Gastrocnemius medialis (tissue), 4 donors: ENCODE measurements at regions of chr17 and their contacts with region 1.

Region 1: DNA sequence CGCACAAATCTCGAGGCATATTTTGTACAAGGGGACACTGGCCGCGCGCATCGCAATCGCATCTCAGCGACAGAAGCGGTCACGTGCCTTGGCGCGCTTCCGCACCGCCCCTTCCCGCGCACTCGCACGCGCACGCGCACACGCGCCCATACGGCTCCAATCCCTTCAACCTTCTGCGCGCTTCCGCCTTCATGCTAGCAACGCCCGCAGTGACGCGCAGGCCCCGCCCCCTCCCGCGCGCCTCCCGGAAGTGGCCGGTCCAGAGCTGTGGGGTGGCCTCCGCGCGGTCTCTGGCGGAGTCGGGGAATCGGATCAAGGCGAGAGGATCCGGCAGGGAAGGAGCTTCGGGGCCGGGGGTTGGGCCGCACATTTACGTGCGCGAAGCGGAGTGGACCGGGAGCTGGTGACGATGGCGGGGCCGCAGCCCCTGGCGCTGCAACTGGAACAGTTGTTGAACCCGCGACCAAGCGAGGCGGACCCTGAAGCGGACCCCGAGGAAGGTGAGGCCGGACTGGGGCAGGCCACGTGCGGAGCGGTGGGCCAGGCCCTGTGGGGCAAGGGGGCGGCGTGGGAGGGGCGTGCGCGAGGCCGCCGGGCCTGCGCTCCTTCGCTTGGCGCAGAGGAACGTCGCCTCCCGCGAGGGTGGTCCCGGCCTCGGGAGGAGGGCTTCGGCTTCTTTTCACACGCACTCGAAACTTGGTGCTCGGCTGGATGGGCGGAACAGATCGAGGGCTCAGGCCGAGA is at the start of gene AATF:
- DNase-seq: peak; percentile 89 to 93
- ATAC-seq: peak; percentile 96 to 98
- H3K4me3 ChIP-seq: peak within 1 kb of the TSS; percentile 68 to 96 (median 86)
- H3K27ac ChIP-seq: peak within 1 kb of the TSS; percentile 78 to 92 (median 84)
- H3K4me1 ChIP-seq: peaks cover 15 to 19% of the 10 kb centered on the region in 2 donors
- H3K27me3 ChIP-seq: peaks cover 38 to 41% (median 41%) of the 10 kb centered on the region in 3 donors
- CTCF ChIP-seq: no peak
- POLR2A ChIP-seq: peak; percentile 50 to 74
- total RNA-seq, gene AATF: 30.3 to 50.5 (median 40.9) TPM

Region 2: DNA sequence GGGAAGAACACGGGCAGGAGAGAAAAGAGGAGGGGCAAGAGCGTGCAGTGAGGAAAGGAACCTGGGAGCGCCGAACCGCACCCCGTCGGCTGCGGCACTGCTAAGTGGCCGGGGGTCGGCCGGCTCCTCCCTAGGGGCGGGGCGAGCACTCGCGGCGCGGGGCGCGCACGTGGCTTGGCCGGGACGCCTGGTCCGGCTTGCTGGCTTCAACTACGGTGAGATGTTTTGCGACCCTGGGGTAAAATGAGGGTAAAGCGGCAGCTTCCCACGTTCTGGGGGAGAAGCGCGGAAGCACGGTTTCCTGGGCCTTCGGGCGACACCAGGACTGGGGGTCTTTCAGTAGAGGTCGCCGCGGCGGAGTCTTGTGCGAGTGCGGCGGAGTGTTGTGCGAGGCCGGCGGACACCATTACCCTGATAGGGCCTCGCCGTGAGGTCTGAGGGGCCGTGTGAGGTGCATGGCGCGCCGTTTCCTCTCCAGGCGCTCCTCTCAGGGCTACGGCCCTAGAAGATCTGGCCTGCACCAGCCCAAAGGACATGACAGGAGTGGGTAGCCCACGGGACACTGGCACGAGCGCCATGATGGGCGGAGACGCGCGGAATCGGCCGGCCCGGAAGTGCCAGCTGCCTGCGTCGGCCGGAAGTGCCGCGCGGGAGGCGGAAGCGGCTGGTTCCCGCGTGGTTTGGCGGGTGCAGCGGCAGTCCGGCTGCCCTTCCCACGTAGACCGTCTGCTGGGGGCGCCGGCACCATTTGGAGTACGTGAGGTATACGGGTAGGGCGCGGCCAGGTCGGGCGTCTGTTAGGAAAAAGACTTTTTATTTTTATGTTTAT is 413.8 kb before region 1 on chr17 and contains the starts of genes MYO19 and PIGW:
- in situ Hi-C with region 1: no loop called
- intact Hi-C with region 1: loop called (anchors 5 kb)
- DNase-seq: peak; percentile 79 to 88
- ATAC-seq: peak; percentile 84 to 89
- H3K4me3 ChIP-seq: peak within 1 kb of the TSS; percentile 70 to 98 (median 92)
- H3K27ac ChIP-seq: peak within 1 kb of the TSS; percentile 91 to 100 (median 99)
- H3K4me1 ChIP-seq: peaks cover 11 to 19% of the 10 kb centered on the region in 2 donors
- H3K27me3 ChIP-seq: no peaks in the 10 kb centered on the region
- CTCF ChIP-seq: peak in 1 of 5 experiments; percentile 11
- POLR2A ChIP-seq: peak; percentile 83 to 92
- total RNA-seq, gene MYO19: 7.5 to 16.8 (median 13.2) TPM
- total RNA-seq, gene PIGW: 3.0 to 6.9 (median 4.7) TPM

Region 3: DNA sequence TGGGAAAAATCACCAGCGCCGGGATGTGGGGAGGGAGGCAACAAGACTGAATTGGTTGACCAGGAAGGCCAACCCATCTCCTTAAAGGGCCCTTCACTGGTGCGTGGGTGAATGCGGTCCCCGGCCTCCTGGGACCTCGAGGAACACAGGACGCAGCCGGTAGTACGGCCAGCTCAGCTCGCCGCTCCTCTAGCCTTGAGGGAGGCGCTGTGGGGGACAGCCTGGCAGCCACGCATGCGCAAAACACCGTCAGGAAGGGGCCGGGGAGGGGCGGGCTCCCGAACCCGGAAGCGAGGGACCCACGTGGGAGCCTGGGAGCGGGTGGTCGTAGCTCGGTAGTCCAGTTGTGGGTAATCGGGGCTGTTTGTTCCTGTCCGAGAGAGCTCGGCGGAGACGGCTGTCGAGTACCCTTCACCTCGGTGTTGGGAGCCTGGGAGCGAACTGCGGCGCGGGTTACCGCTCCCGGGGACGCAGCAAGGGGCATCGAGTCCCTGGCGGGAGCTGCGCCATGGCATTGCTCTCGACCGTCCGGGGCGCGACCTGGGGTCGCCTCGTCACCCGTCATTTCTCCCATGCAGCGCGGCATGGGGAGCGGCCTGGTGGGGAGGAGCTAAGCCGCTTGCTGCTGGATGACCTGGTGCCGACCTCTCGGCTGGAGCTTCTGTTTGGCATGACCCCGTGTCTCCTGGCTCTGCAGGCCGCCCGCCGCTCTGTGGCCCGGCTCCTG is 347.4 kb before region 1 on chr17 and contains the start of gene MRM1:
- in situ Hi-C with region 1: loop called in 1 of 4 experiments (anchors 25 kb)
- intact Hi-C with region 1: loop called (anchors 5 kb)
- DNase-seq: peak; percentile 86 to 92
- ATAC-seq: peak; percentile 92 to 93
- H3K4me3 ChIP-seq: peak within 1 kb of the TSS; percentile 82 to 100 (median 88)
- H3K27ac ChIP-seq: peak within 1 kb of the TSS; percentile 76 to 95 (median 90)
- H3K4me1 ChIP-seq: peaks cover 12 to 23% of the 10 kb centered on the region in 2 donors
- H3K27me3 ChIP-seq: no peaks in the 10 kb centered on the region
- CTCF ChIP-seq: peak in 1 of 5 experiments; percentile 21
- POLR2A ChIP-seq: peak; percentile 40 to 66
- total RNA-seq, gene MRM1: 8.8 to 13.9 (median 10.8) TPM

Region 4: DNA sequence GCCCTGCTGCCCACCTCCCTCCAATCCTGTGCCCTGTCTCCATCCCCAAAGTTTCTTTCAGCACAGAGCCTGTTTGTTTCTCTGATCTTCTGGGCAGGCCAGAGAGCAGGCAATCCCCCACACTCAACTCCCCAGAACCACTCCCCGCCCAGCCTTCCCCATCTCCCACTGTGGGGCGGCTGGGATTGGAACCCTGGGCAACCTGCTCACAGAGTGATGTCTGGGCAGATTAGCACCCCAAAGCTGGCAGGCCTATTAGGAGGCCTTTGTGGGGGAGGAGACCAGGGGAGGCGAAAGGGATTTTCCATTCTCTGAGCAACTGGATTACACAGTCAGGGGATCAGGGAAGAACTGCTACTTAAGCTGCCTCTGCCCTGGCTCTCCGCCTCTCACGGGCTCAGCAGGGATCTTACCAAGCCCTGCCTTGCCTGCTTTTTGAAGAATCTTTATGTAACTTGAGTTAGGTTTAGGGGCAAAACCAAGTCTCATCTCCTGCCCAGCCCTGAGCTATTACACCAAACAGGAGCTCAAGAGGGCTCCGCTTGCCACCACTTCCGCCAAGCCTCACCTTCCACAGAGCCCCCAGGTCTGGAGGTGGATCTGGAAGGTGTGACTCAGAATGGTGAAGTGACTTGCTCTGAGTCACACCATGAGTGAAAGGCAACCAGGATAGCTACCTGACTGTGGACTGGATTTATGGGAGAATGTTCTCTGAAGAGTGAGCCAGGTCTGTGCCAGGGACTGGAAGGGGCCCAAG is 27.6 kb before region 1 on chr17:
- in situ Hi-C with region 1: no loop called
- intact Hi-C with region 1: no loop called
- DNase-seq: no peak
- ATAC-seq: no peak
- H3K4me3 ChIP-seq: no peak overlapping the region
- H3K27ac ChIP-seq: no peak overlapping the region
- H3K4me1 ChIP-seq: no peaks in the 10 kb centered on the region
- H3K27me3 ChIP-seq: peaks cover 18 to 23% (median 21%) of the 10 kb centered on the region in 3 donors
- CTCF ChIP-seq: no peak
- POLR2A ChIP-seq: no peak

Region 5: DNA sequence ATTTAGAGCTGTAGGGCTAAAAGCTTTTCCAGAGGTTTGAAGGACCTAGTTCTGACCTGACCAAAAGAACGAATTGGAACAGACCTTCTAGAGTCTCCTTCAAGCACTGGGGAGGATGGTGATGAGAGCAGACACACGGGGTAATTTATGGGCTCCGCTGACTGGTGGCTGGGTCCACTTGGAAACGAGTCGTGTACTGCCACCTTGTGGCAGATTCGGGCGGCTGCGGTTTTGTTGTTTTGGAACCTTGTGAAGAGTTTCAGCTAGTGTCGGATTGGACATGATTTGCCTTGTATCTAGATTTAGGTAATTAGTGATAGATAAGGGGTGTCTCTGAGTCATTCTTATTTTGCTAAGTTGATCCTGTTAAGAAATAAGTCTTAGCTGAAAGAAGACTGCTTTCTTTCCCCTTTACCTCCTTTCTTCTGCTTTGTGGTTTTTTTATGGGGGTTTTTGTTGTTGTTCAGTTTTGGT is 98.8 kb after region 1 on chr17:
- in situ Hi-C with region 1: no loop called
- intact Hi-C with region 1: loop called (anchors 5 kb)
- DNase-seq: peak; percentile 54 to 73
- ATAC-seq: peak; percentile 62 to 91
- H3K4me3 ChIP-seq: no peak overlapping the region
- H3K27ac ChIP-seq: no peak overlapping the region
- H3K4me1 ChIP-seq: peaks cover 0 to 5% of the 10 kb centered on the region in 2 donors
- H3K27me3 ChIP-seq: no peaks in the 10 kb centered on the region
- CTCF ChIP-seq: peak; percentile 55 to 88 (median 80)
- POLR2A ChIP-seq: no peak

Region 6: GRCh38 chr17:37247825-37248224 is 298.9 kb after region 1 on chr17:
- in situ Hi-C with region 1: no loop called
- intact Hi-C with region 1: no loop called
- DNase-seq: no peak
- ATAC-seq: no peak
- H3K4me3 ChIP-seq: no peak overlapping the region
- H3K27ac ChIP-seq: no peak overlapping the region
- H3K4me1 ChIP-seq: no peaks in the 10 kb centered on the region
- H3K27me3 ChIP-seq: no peaks in the 10 kb centered on the region
- CTCF ChIP-seq: no peak
- POLR2A ChIP-seq: no peak

Region 7: GRCh38 chr17:37406635-37407461 is 458.0 kb after region 1 on chr17 and contains the starts of genes ACACA and TADA2A:
- in situ Hi-C with region 1: no loop called
- intact Hi-C with region 1: loop called (anchors 5 kb)
- DNase-seq: peak; percentile 48 to 73
- ATAC-seq: peak; percentile 84 to 86
- H3K4me3 ChIP-seq: peak within 1 kb of the TSS; percentile 85 to 95 (median 92)
- H3K27ac ChIP-seq: peak within 1 kb of the TSS; percentile 95 to 97 (median 96)
- H3K4me1 ChIP-seq: peaks cover 16 to 22% of the 10 kb centered on the region in 2 donors
- H3K27me3 ChIP-seq: no peaks in the 10 kb centered on the region
- CTCF ChIP-seq: peak in 3 of 5 experiments; percentile 10 to 24 (median 17)
- POLR2A ChIP-seq: peak; percentile 63 to 69
- total RNA-seq, gene ACACA: 13.4 to 28.9 (median 18.9) TPM
- total RNA-seq, gene TADA2A: 9.7 to 18.4 (median 14.8) TPM